Activated B cell treated with CpG ODN at 0.5 μM for 24 hours (primary cell): ENCODE measurements at regions of chr4 and their contacts with region 1.

Region 1: DNA sequence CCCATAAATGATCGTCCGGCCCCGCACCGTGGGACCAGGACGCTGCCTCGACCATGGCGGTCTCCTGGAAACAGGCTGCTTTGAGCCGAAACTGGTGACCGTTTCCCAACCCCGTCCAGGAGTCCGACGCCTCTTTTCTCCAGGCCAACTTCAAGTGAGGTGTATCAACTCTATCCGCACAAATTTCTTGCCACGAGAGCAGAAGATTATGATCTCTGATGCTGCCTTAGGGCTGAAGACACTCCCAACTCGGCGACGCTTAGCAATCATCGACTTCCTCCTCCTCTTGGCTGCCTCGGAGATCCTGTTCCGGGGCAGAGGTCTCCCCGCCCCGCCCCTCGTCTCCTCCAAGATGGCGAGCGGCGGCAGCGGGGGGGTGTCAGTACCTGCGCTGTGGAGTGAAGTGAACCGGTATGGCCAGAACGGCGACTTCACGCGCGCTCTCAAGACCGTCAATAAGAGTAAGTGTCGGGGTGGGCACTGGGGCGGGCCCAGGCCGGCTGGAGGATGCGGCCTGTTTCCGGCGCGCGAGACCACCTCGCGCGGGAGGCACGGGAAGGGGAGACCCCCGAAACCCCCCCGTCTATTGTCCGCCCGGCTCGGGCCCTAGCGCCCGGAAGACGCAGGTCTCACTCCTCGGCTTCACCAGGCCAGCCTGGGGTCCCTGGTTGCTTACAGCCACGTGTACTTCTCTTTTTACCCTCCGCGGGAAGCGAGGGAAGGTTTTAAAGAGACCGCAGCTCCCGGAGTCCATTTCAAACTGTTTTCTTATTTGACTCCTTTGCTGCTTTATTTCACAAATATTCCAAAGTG is at the start of gene SRP72:
- DNase-seq: peak; percentile 83
- ATAC-seq: peak; percentile 96
- H3K4me3 Mint-ChIP-seq: peak within 1 kb of the TSS; percentile 99
- H3K27ac Mint-ChIP-seq: peak within 1 kb of the TSS; percentile 96
- H3K4me1 Mint-ChIP-seq: peaks cover 57% of the 10 kb centered on the region
- H3K27me3 Mint-ChIP-seq: no peaks in the 10 kb centered on the region
- CTCF ChIP-seq: no peak
- total RNA-seq, gene SRP72: 139 TPM in 2 replicates

Region 2: DNA sequence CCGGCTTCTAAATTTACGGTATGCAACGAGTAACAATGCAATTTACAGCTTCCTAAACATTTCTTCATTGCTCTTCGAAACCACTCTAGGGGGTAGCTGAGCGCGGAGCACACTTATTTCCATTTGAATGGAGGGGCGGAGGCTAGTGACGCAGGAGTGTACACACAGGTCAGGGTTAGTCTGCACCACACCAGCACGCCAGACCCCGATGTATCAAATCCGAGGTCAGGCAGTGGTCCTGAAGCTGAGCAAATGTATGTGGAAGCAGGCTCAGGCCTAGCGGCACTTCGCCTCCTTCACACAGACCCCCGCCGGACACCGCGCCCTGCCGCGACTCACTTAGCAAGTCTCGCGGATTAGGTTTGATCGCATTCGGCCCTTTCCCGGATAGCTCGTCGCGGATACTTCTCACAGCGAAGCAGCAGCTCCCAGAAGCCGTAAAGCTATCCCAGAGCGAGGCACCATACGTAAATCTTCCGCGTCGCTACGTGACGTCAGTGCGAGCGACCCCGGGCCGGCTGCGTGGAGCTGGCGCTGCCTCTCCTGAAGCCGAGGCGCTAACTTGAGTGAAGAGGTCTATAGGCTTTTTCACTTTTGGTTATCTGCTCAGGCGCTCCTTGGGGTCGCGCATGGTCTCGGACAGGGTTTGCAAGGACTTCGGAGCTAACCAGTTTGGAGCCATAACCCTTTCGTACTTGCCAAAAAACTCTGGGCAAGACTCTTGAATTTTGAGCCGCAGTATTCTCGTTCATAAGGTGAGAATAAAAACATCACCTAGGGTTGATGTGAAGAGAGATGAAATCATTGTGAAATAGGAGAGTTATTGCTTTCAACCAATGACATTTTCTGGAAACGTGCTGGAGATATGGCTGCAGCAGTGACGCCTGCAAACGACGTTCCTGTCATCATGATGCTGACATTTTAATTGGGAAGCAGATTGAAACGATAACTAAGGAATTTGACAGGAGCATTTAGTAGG is 80.2 kb before region 1 on chr4 and contains the start of gene AASDH:
- CTCF ChIA-PET with region 1: interaction called, 3 read pairs
- POLR2A ChIA-PET with region 1: interaction called, 20 read pairs
- intact Hi-C with region 1: loop called (anchors 1 kb)
- DNase-seq: peak; percentile 96
- ATAC-seq: peak; percentile 90
- H3K4me3 Mint-ChIP-seq: peak within 1 kb of the TSS; percentile 93
- H3K27ac Mint-ChIP-seq: peak within 1 kb of the TSS; percentile 99
- H3K4me1 Mint-ChIP-seq: peaks cover 27% of the 10 kb centered on the region
- H3K27me3 Mint-ChIP-seq: no peaks in the 10 kb centered on the region
- CTCF ChIP-seq: no peak
- total RNA-seq, gene AASDH: 12.8 and 14.2 TPM in 2 replicates

Region 3: DNA sequence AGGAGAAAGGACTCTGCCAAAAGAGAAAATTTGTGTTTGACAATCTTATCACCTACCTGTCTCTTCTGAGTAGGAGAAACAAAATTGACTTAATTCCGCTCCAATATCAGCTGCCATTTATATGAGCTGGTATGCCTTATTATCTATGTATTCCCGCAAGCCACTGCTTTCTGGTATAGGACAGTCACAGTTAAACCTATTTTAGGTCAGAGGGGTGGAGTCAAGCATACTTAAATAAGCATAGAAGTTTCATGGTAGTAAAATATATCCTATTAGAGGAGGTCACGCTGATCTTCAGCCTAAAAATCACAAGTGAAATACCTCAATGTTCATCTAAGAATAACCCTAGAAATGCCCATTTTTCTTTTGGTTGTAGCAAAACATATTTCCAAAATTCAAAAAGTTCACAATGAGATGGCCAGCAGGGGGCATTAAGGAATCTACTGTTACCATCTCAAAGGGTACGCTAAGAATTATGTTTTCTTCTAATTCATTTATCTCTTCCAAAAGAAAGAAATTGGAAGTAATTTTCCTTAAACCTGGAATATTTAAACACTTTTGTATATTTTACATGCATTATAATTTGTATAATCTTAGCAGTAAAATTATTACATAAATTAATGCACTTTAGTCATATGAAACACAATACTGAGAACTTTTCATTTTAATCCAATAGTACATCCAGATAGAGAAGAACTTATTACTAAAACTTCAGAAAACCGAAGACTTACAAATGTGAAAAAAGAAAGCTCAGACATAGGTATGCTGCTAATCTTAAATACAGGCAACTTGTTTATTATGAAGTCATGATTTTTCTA is 42.6 kb before region 1 on chr4:
- CTCF ChIA-PET with region 1: interaction called, 24 read pairs
- POLR2A ChIA-PET with region 1: no interaction called
- intact Hi-C with region 1: loop called (anchors 2 kb)
- DNase-seq: no peak
- ATAC-seq: no peak
- H3K4me3 Mint-ChIP-seq: no peak overlapping the region
- H3K27ac Mint-ChIP-seq: no peak overlapping the region
- H3K4me1 Mint-ChIP-seq: peaks cover 12% of the 10 kb centered on the region
- H3K27me3 Mint-ChIP-seq: no peaks in the 10 kb centered on the region
- CTCF ChIP-seq: peak; percentile 75

Region 4: GRCh38 chr4:56505269-56506130 is 38.0 kb after region 1 on chr4 and contains the start of gene ARL9:
- CTCF ChIA-PET with region 1: no interaction called
- POLR2A ChIA-PET with region 1: interaction called, 3 read pairs
- intact Hi-C with region 1: loop called (anchors 2 kb)
- DNase-seq: peak; percentile 52
- ATAC-seq: peak; percentile 86
- H3K4me3 Mint-ChIP-seq: peak within 1 kb of the TSS; percentile 88
- H3K27ac Mint-ChIP-seq: peak within 1 kb of the TSS; percentile 50
- H3K4me1 Mint-ChIP-seq: peaks cover 19% of the 10 kb centered on the region
- H3K27me3 Mint-ChIP-seq: peaks cover 2% of the 10 kb centered on the region
- CTCF ChIP-seq: no peak
- total RNA-seq, gene ARL9: 0.22 TPM in 1 of 2 replicates, not detected in the other

Region 5: DNA sequence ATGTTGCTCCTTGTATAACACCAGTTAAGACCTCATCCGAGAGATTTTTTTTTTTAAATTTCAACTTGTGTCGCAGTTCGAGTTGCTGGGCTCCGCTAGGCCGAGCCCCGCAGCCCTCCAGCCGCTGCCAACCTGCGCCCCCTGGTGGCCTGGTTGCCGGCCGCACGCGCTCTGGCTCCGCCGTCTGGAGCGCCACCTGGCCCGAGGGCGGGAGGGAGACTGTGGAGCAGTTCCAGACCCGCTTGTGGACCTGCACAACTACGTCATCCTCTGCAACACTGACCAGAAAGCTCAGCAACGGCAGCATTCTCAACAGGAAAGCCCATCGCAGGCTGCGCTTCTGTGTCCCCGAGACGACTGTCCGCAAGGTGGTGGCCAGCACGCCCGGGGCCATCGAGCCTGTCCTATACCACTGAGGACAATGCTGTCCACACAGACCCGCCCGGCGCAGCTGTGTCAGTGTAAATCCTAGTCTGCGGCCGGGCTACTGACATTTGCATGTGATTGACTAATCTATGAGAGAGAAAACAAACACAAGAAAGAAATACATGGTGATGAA is 77.2 kb after region 1 on chr4:
- CTCF ChIA-PET with region 1: no interaction called
- POLR2A ChIA-PET with region 1: no interaction called
- intact Hi-C with region 1: loop called (anchors 1 kb)
- DNase-seq: peak; percentile 89
- ATAC-seq: peak; percentile 99
- H3K4me3 Mint-ChIP-seq: peak overlapping the region; percentile 71
- H3K27ac Mint-ChIP-seq: no peak overlapping the region
- H3K4me1 Mint-ChIP-seq: peaks cover 10% of the 10 kb centered on the region
- H3K27me3 Mint-ChIP-seq: peaks cover 14% of the 10 kb centered on the region
- CTCF ChIP-seq: peak; percentile 93

Region 6: GRCh38 chr4:56907489-56908205 is 440.2 kb after region 1 on chr4 and contains the start of gene REST:
- CTCF ChIA-PET with region 1: no interaction called
- POLR2A ChIA-PET with region 1: interaction called, 6 read pairs
- intact Hi-C with region 1: loop called (anchors 1 kb)
- DNase-seq: peak; percentile 90
- ATAC-seq: peak; percentile 59
- H3K4me3 Mint-ChIP-seq: peak within 1 kb of the TSS; percentile 91
- H3K27ac Mint-ChIP-seq: peak within 1 kb of the TSS; percentile 77
- H3K4me1 Mint-ChIP-seq: peaks cover 41% of the 10 kb centered on the region
- H3K27me3 Mint-ChIP-seq: no peaks in the 10 kb centered on the region
- CTCF ChIP-seq: no peak
- total RNA-seq, gene REST: 48.3 and 49.1 TPM in 2 replicates